CD8-positive, alpha-beta T cell (primary cell): ENCODE measurements at regions of chr17 and their contacts with region 1.

Region 1: DNA sequence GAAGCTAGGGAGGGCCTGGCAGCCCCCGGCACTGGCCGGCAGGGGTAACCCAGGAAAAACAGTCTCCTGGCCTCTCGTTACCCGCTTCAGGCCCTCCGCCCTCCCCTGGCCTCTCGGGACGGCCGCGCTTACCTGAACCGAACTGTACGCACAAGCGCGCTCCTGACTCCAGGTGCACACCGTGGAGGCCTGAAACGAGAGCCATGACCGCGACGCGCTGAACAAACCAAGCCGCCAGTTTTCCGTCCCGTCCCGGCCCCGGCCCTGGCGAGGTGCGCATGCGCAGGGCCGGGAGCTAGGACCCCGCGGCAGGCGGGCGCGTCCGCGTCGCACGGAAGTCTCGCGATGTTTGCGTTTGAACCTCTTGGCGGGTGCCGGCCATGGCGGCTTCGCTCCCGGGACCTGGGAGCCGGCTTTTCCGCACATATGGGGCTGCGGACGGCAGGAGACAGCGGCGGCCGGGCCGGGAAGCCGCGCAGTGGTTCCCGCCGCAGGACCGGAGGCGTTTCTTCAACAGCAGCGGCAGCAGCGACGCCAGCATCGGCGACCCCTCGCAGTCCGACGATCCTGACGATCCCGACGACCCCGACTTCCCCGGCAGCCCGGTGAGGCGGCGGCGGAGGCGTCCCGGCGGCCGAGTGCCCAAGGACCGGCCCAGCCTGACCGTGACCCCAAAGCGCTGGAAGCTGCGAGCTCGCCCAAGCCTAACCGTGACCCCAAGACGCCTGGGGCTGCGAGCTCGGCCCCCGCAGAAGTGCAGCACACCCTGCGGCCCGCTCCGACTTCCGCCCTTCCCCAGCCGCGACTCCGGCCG is at the start of gene HASPIN:
- DNase-seq: peak; percentile 80 to 96 (median 90)
- ATAC-seq: peak; percentile 90
- H3K4me3 ChIP-seq: peak within 1 kb of the TSS; percentile 89 to 99
- H3K4me3 Mint-ChIP-seq: peak within 1 kb of the TSS; percentile 88
- H3K27ac ChIP-seq: peak within 1 kb of the TSS; percentile 63 to 72
- H3K27ac Mint-ChIP-seq: peak within 1 kb of the TSS; percentile 84
- H3K4me1 ChIP-seq: peaks cover 25% of the 10 kb centered on the region
- H3K4me1 Mint-ChIP-seq: peaks cover 35% of the 10 kb centered on the region
- H3K27me3 ChIP-seq: no peaks in the 10 kb centered on the region
- H3K27me3 Mint-ChIP-seq: no peaks in the 10 kb centered on the region
- CTCF ChIP-seq: no peak
- total RNA-seq, gene HASPIN: 0.38 to 0.58 TPM

Region 2: GRCh38 chr17:3626831-3627768 is 96.7 kb before region 1 on chr17:
- CTCF ChIA-PET with region 1: no interaction called
- POLR2A ChIA-PET with region 1: no interaction called
- intact Hi-C with region 1: no loop called
- DNase-seq: no peak
- ATAC-seq: no peak
- H3K4me3 ChIP-seq: no peak overlapping the region
- H3K4me3 Mint-ChIP-seq: no peak overlapping the region
- H3K27ac ChIP-seq: no peak overlapping the region
- H3K27ac Mint-ChIP-seq: no peak overlapping the region
- H3K4me1 ChIP-seq: no peaks in the 10 kb centered on the region
- H3K4me1 Mint-ChIP-seq: peaks cover under 1% of the 10 kb centered on the region
- H3K27me3 ChIP-seq: no peaks in the 10 kb centered on the region
- H3K27me3 Mint-ChIP-seq: no peaks in the 10 kb centered on the region
- CTCF ChIP-seq: no peak

Region 3: GRCh38 chr17:3683054-3683511 is 40.7 kb before region 1 on chr17:
- CTCF ChIA-PET with region 1: interaction called, 18 read pairs
- POLR2A ChIA-PET with region 1: no interaction called
- intact Hi-C with region 1: loop called (anchors 2 kb)
- DNase-seq: peak; percentile 27 to 80 (median 65)
- ATAC-seq: peak; percentile 99
- H3K4me3 ChIP-seq: no peak overlapping the region
- H3K4me3 Mint-ChIP-seq: no peak overlapping the region
- H3K27ac ChIP-seq: no peak overlapping the region
- H3K27ac Mint-ChIP-seq: no peak overlapping the region
- H3K4me1 ChIP-seq: no peaks in the 10 kb centered on the region
- H3K4me1 Mint-ChIP-seq: peaks cover 8% of the 10 kb centered on the region
- H3K27me3 ChIP-seq: no peaks in the 10 kb centered on the region
- H3K27me3 Mint-ChIP-seq: no peaks in the 10 kb centered on the region
- CTCF ChIP-seq: peak; percentile 78

Region 4: DNA sequence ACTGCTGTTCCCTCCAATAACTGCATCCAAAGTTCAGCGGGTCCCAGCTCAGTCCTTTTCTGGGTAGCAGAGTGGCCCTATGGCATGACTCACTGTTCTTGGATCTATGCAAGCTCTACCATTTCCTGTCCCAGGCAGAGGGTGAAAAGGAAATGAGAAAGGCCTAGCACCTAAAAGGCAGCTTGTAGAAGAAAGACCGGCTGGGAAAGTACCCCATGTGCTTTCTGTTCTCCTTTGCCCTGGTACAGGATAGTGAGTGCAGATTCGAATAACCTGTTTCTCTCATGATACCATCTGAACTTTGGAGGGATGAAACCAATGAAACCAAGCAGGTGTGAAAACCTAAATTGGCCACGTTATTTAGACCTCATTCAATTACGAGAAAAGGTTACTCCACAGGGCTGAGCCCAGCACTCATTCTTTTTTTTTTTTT is 12.8 kb before region 1 on chr17:
- CTCF ChIA-PET with region 1: interaction called, 6 read pairs
- POLR2A ChIA-PET with region 1: interaction called, 26 read pairs
- intact Hi-C with region 1: loop called (anchors 1 kb)
- DNase-seq: peak; percentile 30 to 96 (median 67)
- ATAC-seq: peak; percentile 97
- H3K4me3 ChIP-seq: no peak overlapping the region
- H3K4me3 Mint-ChIP-seq: peak overlapping the region; percentile 37
- H3K27ac ChIP-seq: peak overlapping the region in 1 of 2 experiments; percentile 62
- H3K27ac Mint-ChIP-seq: peak overlapping the region; percentile 86
- H3K4me1 ChIP-seq: peaks cover 31% of the 10 kb centered on the region
- H3K4me1 Mint-ChIP-seq: peaks cover 38% of the 10 kb centered on the region
- H3K27me3 ChIP-seq: no peaks in the 10 kb centered on the region
- H3K27me3 Mint-ChIP-seq: no peaks in the 10 kb centered on the region
- CTCF ChIP-seq: no peak

Region 5: GRCh38 chr17:3827124-3827773 is 103.5 kb after region 1 on chr17:
- CTCF ChIA-PET with region 1: interaction called, 432 read pairs
- POLR2A ChIA-PET with region 1: no interaction called
- intact Hi-C with region 1: no loop called
- DNase-seq: peak; percentile 50 to 85 (median 79)
- ATAC-seq: peak; percentile 80
- H3K4me3 ChIP-seq: no peak overlapping the region
- H3K4me3 Mint-ChIP-seq: no peak overlapping the region
- H3K27ac ChIP-seq: no peak overlapping the region
- H3K27ac Mint-ChIP-seq: no peak overlapping the region
- H3K4me1 ChIP-seq: no peaks in the 10 kb centered on the region
- H3K4me1 Mint-ChIP-seq: peaks cover 2% of the 10 kb centered on the region
- H3K27me3 ChIP-seq: no peaks in the 10 kb centered on the region
- H3K27me3 Mint-ChIP-seq: no peaks in the 10 kb centered on the region
- CTCF ChIP-seq: peak; percentile 96

Region 6: GRCh38 chr17:4032738-4033137 is 309.0 kb after region 1 on chr17:
- CTCF ChIA-PET with region 1: no interaction called
- POLR2A ChIA-PET with region 1: no interaction called
- intact Hi-C with region 1: no loop called
- DNase-seq: no peak
- ATAC-seq: no peak
- H3K4me3 ChIP-seq: no peak overlapping the region
- H3K4me3 Mint-ChIP-seq: no peak overlapping the region
- H3K27ac ChIP-seq: no peak overlapping the region
- H3K27ac Mint-ChIP-seq: no peak overlapping the region
- H3K4me1 ChIP-seq: no peaks in the 10 kb centered on the region
- H3K4me1 Mint-ChIP-seq: no peaks in the 10 kb centered on the region
- H3K27me3 ChIP-seq: no peaks in the 10 kb centered on the region
- H3K27me3 Mint-ChIP-seq: no peaks in the 10 kb centered on the region
- CTCF ChIP-seq: no peak